Activated B cell treated with CpG ODN at 0.5 μM for 24 hours (primary cell): ENCODE measurements at regions of chr3 and their contacts with region 1.

Region 1: GRCh38 chr3:20340324-20340928 is 154.4 kb upstream of the SGO1 start:
- DNase-seq: no peak
- ATAC-seq: peak; percentile 61
- H3K4me3 Mint-ChIP-seq: no peak overlapping the region
- H3K27ac Mint-ChIP-seq: no peak overlapping the region
- H3K4me1 Mint-ChIP-seq: peaks cover 12% of the 10 kb centered on the region
- H3K27me3 Mint-ChIP-seq: no peaks in the 10 kb centered on the region
- CTCF ChIP-seq: peak; percentile 42

Region 2: GRCh38 chr3:19392150-19392549 is 948.3 kb before region 1 on chr3:
- CTCF ChIA-PET with region 1: no interaction called
- POLR2A ChIA-PET with region 1: no interaction called
- intact Hi-C with region 1: no loop called
- DNase-seq: no peak
- ATAC-seq: peak; percentile 52
- H3K4me3 Mint-ChIP-seq: no peak overlapping the region
- H3K27ac Mint-ChIP-seq: no peak overlapping the region
- H3K4me1 Mint-ChIP-seq: peaks cover 53% of the 10 kb centered on the region
- H3K27me3 Mint-ChIP-seq: no peaks in the 10 kb centered on the region
- CTCF ChIP-seq: no peak

Region 3: DNA sequence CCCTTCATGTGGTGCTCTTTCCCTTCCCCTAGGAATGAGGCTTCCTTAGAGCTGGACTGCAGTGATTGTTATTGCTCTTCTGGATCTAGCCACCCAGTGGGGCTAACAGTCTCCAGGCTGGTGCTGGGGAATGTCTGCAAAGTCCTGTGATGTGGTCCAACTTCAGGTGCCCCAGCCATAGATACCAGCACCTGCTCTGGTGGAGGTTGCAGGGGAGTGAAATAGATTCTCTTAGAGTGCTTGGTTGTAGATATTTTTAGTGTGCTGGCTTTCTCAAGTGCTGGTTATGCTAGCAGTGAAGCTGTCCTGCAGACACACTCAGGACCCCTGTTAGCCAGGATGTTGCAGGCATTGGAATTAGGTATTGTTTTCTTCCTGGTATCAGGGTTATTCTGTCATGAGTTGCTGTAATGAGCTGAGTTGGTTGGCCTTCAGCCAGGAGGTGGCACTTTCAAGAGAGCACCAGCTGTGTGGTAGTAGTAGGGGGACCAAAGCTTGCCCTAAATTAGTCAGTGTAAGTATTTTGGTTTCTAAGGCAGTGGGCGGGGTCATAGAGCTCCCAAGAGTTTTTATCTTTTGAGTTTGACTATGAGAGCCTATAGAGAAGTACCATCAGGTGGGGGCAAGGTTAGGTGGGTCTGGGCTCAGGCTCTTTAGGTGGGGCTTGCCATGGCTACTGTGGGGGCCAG is 163.1 kb after region 1 on chr3:
- CTCF ChIA-PET with region 1: no interaction called
- POLR2A ChIA-PET with region 1: no interaction called
- intact Hi-C with region 1: no loop called
- DNase-seq: no peak
- ATAC-seq: no peak
- H3K4me3 Mint-ChIP-seq: no peak overlapping the region
- H3K27ac Mint-ChIP-seq: no peak overlapping the region
- H3K4me1 Mint-ChIP-seq: no peaks in the 10 kb centered on the region
- H3K27me3 Mint-ChIP-seq: no peaks in the 10 kb centered on the region
- CTCF ChIP-seq: no peak

Region 4: DNA sequence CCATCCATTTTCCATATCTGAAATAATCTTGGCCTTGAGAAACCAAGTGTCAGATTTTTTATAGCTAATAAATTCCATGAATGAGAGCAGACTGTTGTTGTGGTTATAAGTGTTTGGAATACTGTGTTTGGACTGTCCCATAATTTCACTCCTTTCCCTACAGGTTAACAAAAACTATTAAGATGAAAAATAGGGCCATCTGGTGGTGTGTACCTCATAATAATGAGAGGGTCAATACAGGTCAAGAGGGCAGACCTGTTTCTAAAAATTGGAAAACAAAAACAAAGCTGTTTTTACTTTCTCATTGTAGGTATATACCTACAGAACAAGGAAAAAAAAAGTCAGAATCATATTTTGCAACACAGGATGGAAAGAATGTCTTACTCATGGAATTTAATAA is 399.4 kb after region 1 on chr3:
- CTCF ChIA-PET with region 1: no interaction called
- POLR2A ChIA-PET with region 1: no interaction called
- intact Hi-C with region 1: loop called (anchors 10 kb)
- DNase-seq: no peak
- ATAC-seq: no peak
- H3K4me3 Mint-ChIP-seq: no peak overlapping the region
- H3K27ac Mint-ChIP-seq: no peak overlapping the region
- H3K4me1 Mint-ChIP-seq: no peaks in the 10 kb centered on the region
- H3K27me3 Mint-ChIP-seq: no peaks in the 10 kb centered on the region
- CTCF ChIP-seq: no peak

Region 5: DNA sequence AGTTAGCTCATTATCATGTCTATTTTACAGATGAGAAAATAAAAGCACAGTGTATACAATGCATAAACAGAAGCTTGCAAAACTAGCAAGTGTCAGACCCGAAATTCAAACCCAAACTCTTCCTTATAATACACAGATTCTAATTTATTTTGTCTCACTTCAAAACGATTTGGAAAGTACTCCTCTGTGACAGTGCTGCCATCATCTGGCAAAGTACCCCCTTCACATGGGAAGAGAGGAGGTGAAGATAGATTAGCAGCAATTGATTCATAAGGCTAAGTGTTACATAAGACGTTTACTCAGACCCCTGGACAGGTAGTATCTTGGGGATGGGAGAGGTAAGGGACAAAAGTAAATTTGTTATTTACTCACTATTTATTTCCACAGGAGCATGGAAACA is 589.6 kb after region 1 on chr3:
- CTCF ChIA-PET with region 1: no interaction called
- POLR2A ChIA-PET with region 1: no interaction called
- intact Hi-C with region 1: loop called (anchors 1 kb)
- DNase-seq: no peak
- ATAC-seq: no peak
- H3K4me3 Mint-ChIP-seq: no peak overlapping the region
- H3K27ac Mint-ChIP-seq: no peak overlapping the region
- H3K4me1 Mint-ChIP-seq: no peaks in the 10 kb centered on the region
- H3K27me3 Mint-ChIP-seq: no peaks in the 10 kb centered on the region
- CTCF ChIP-seq: no peak

Region 6: DNA sequence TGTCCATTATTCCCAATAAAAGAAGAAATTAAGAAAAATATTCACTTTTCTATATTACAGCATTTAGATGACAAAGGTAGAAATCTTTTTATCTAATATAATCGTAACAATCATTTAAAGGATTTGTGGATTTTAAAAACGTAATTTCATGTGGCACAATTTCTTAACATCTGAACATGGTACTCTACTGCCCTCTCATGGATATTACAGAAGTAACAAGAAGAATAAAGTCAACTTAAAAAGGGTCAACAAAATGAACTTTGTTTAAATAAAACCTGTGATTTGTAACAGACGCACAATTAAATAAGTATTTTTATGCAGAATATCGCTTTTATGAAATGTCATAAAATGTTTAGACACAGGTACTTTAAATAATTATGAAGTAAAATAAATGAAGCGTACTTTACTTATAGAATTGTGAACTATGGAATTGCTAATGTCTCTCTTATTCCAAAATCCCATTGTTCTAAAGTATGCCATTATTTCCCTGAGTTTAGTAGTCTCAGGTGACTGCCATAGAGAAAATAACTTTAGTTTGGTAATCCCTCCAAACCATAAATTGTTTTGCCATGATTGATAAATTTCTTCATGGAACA is 1777.4 kb after region 1 on chr3:
- CTCF ChIA-PET with region 1: no interaction called
- POLR2A ChIA-PET with region 1: no interaction called
- intact Hi-C with region 1: loop called (anchors 1 kb)
- DNase-seq: no peak
- ATAC-seq: no peak
- H3K4me3 Mint-ChIP-seq: no peak overlapping the region
- H3K27ac Mint-ChIP-seq: no peak overlapping the region
- H3K4me1 Mint-ChIP-seq: no peaks in the 10 kb centered on the region
- H3K27me3 Mint-ChIP-seq: no peaks in the 10 kb centered on the region
- CTCF ChIP-seq: no peak